Gastrocnemius medialis (tissue), 4 donors: ENCODE measurements at regions of chr5 and their contacts with region 1.

Region 1: DNA sequence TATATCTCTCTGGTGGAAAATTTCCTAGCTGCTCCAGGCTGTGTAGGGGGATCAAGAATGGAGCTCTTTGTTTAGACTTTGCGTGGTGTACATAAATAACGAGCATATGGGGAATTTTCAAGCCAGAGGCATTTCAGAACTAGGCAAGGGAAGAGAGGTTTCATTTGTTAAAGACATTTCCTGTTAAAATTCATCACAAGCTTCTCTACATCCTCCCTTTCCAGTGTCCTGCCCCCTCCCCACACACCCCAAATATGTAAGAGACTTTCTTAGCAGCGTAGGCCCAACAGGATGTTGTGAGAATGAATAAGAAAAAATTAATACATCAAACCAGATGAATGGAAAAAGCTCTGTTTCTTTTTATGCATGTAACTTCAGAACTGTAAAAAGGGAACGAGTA is 150.3 kb downstream of the GPBP1 start:
- DNase-seq: no peak
- ATAC-seq: no peak
- H3K4me3 ChIP-seq: no peak overlapping the region
- H3K27ac ChIP-seq: no peak overlapping the region
- H3K4me1 ChIP-seq: no peaks in the 10 kb centered on the region
- H3K27me3 ChIP-seq: no peaks in the 10 kb centered on the region
- CTCF ChIP-seq: no peak
- POLR2A ChIP-seq: no peak

Region 2: GRCh38 chr5:56938858-56939257 is 385.3 kb before region 1 on chr5:
- in situ Hi-C with region 1: no loop called
- intact Hi-C with region 1: no loop called
- DNase-seq: no peak
- ATAC-seq: no peak
- H3K4me3 ChIP-seq: no peak overlapping the region
- H3K27ac ChIP-seq: no peak overlapping the region
- H3K4me1 ChIP-seq: peaks cover 0 to 5% of the 10 kb centered on the region in 2 donors
- H3K27me3 ChIP-seq: no peaks in the 10 kb centered on the region
- CTCF ChIP-seq: no peak
- POLR2A ChIP-seq: no peak

Region 3: GRCh38 chr5:57368010-57368409 is 43.8 kb after region 1 on chr5:
- in situ Hi-C with region 1: no loop called
- intact Hi-C with region 1: loop called (anchors 2 kb)
- DNase-seq: no peak
- ATAC-seq: no peak
- H3K4me3 ChIP-seq: no peak overlapping the region
- H3K27ac ChIP-seq: no peak overlapping the region
- H3K4me1 ChIP-seq: no peaks in the 10 kb centered on the region
- H3K27me3 ChIP-seq: no peaks in the 10 kb centered on the region
- CTCF ChIP-seq: no peak
- POLR2A ChIP-seq: no peak